Posterior vena cava (tissue), 2 donors: ENCODE measurements at regions of chr7 and their contacts with region 1.

Region 1: GRCh38 chr7:116236020-116236630 is 25.8 kb downstream of the TES start:
- DNase-seq: no peak

Region 2: GRCh38 chr7:116173051-116174028 is 62.8 kb before region 1 on chr7:
- intact Hi-C with region 1: loop called in 1 of 2 experiments (anchors 10 kb)
- DNase-seq: no peak

Region 3: GRCh38 chr7:116180302-116180701 is 55.8 kb before region 1 on chr7:
- intact Hi-C with region 1: loop called (anchors 5 to 10 kb)
- DNase-seq: no peak

Region 4: DNA sequence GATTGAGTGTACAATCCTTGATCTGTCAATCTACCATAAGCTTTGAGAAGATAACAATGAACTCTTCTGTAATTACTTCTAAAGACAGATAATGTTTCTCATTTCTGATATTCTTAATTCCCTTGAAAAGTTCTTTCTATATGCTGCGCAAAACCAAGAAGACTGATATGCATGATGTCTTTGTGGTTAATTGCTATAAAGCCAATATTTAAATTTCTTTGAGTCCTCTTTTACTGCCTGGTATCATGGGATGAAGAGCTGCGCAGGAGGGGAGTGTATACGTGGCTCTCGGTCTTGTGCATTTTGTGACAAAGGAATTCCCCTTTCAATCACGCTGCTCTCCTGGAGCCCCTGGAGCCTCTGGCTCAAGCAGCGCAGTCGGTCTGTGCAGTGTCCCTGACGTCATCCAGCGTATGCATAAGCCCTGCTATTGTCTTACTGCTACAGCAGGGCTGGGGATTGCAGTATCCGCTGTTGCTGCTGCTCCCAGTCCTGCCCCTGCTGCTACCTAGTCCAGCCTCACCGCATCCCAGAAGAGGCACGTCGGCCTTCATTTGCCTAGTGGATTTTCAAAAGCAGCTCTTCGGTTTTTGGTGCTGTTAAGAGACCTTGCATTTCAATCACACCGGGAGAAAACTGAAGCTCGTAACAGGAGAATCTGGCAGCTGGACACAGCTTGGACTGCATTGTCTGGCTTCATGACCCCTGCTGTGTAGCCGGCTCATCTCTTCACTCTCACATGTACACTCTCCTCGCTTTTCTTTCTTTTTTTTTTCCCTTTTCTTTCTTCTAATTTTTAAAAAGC is 783.9 kb after region 1 on chr7:
- intact Hi-C with region 1: no loop called
- DNase-seq: peak; percentile 67